Ovary (tissue), 10 donors: ENCODE measurements at regions of chr5 and their contacts with region 1.

Region 1: DNA sequence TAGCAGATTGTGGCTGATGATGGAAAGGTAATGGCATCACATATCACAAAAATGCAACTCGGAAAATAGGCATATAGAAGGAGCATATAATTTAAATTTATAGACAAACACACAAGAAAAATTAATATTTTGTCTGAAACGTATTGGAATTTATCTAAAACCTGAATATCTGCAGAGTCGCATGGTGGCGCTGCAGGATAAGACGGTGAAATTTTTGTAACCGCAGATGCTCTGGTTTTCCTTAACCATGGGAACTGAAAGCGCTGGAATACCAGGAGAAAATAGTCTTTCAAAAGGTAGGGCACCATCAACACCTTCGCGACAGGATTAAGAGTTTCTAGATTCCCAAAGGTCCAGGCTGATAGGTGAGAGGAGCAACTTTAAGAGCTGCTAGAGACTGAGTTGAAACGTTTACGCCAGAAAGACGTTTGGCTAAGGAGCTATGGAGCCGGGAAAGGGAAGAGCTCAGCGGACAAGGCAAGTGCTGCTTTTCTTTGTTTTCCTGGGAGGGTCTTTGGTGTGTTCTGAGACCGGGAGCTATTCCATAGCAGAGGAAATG is 11.0 kb upstream of the PCDHB15 start:
- DNase-seq: peak in 2 of 5 donors; percentile 35 to 42
- H3K4me3 ChIP-seq: peak overlapping the region; percentile 8
- H3K27ac ChIP-seq: no peak overlapping the region
- H3K4me1 ChIP-seq: no peaks in the 10 kb centered on the region
- H3K27me3 ChIP-seq: no peaks in the 10 kb centered on the region
- CTCF ChIP-seq: peak in 2 of 3 donors; percentile 15 to 19
- EP300 ChIP-seq: no peak
- POLR2A ChIP-seq: no peak

Region 2: DNA sequence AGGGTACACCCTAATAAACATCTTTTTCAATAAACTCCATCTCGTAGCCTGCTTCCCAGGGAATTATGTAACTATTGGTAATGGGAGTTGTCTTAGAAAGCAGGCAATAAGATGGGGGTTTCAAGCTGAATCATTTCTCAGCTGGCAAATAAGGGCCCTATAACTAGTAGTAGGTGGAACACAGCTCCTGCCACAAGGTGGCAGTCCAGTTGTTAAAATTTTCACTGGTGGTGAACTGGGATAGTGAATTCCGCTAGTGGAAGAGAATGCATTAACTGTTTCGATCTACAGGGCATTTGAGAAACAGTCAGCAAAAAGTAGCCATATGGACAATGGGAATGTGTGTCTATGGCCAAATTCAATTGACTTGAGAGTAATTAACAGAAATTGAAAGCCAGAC is 38.7 kb after region 1 on chr5:
- intact Hi-C with region 1: no loop called
- DNase-seq: no peak
- H3K4me3 ChIP-seq: no peak overlapping the region
- H3K27ac ChIP-seq: no peak overlapping the region
- H3K4me1 ChIP-seq: no peaks in the 10 kb centered on the region
- H3K27me3 ChIP-seq: no peaks in the 10 kb centered on the region
- CTCF ChIP-seq: no peak
- EP300 ChIP-seq: no peak
- POLR2A ChIP-seq: no peak

Region 3: GRCh38 chr5:141623186-141623585 is 389.0 kb after region 1 on chr5:
- intact Hi-C with region 1: loop called in 1 of 4 experiments (anchors 10 kb)
- DNase-seq: no peak
- H3K4me3 ChIP-seq: no peak overlapping the region
- H3K27ac ChIP-seq: no peak overlapping the region
- H3K4me1 ChIP-seq: no peaks in the 10 kb centered on the region
- H3K27me3 ChIP-seq: no peaks in the 10 kb centered on the region
- CTCF ChIP-seq: no peak
- EP300 ChIP-seq: no peak
- POLR2A ChIP-seq: no peak